T-cell (primary cell): ENCODE measurements at regions of chrX and their contacts with region 1.

Region 1: GRCh38 chrX:102899940-102900916 is 36.8 kb upstream of the RAB40AL start:
- DNase-seq: peak; percentile 28 to 78 (median 57)
- ATAC-seq: peak; percentile 67 to 91 (median 76)
- H3K4me3 ChIP-seq: no peak overlapping the region
- H3K4me3 Mint-ChIP-seq: peak overlapping the region in 2 of 3 donors; percentile 33 to 56
- H3K27ac ChIP-seq: no peak overlapping the region
- H3K27ac Mint-ChIP-seq: no peak overlapping the region
- H3K4me1 ChIP-seq: peaks cover 0 to 4% of the 10 kb centered on the region in 2 experiments
- H3K4me1 Mint-ChIP-seq: peaks cover 8 to 9% (median 9%) of the 10 kb centered on the region in 3 donors
- H3K27me3 ChIP-seq: no peaks in the 10 kb centered on the region
- H3K27me3 Mint-ChIP-seq: peaks cover 0 to 5% of the 10 kb centered on the region in 2 donors

Region 2: GRCh38 chrX:102067966-102068708 is 832.1 kb before region 1 on chrX:
- CTCF ChIA-PET with region 1: interaction called in 1 of 2 experiments, 17 read pairs
- POLR2A ChIA-PET with region 1: no interaction called
- DNase-seq: peak in 9 of 35 experiments; percentile 1 to 45 (median 5)
- ATAC-seq: no peak
- H3K4me3 ChIP-seq: no peak overlapping the region
- H3K4me3 Mint-ChIP-seq: no peak overlapping the region
- H3K27ac ChIP-seq: no peak overlapping the region
- H3K27ac Mint-ChIP-seq: no peak overlapping the region
- H3K4me1 ChIP-seq: no peaks in the 10 kb centered on the region
- H3K4me1 Mint-ChIP-seq: no peaks in the 10 kb centered on the region
- H3K27me3 ChIP-seq: peaks cover 0 to 5% of the 10 kb centered on the region in 2 experiments
- H3K27me3 Mint-ChIP-seq: peaks cover 6 to 27% of the 10 kb centered on the region in 2 donors

Region 3: GRCh38 chrX:102155806-102156179 is 744.4 kb before region 1 on chrX and contains the start of gene BEX5:
- CTCF ChIA-PET with region 1: interaction called in 1 of 2 experiments, 10 read pairs
- POLR2A ChIA-PET with region 1: no interaction called
- DNase-seq: peak; percentile 5 to 76 (median 48)
- ATAC-seq: peak; percentile 90 to 94 (median 92)
- H3K4me3 ChIP-seq: peak within 1 kb of the TSS; percentile 36 to 66
- H3K4me3 Mint-ChIP-seq: peak within 1 kb of the TSS; percentile 89 to 98 (median 98)
- H3K27ac ChIP-seq: peak within 1 kb of the TSS; percentile 75
- H3K27ac Mint-ChIP-seq: peak within 1 kb of the TSS; percentile 94
- H3K4me1 ChIP-seq: peaks cover 0 to 8% of the 10 kb centered on the region in 2 experiments
- H3K4me1 Mint-ChIP-seq: peaks cover 11 to 24% (median 11%) of the 10 kb centered on the region in 3 donors
- H3K27me3 ChIP-seq: no peaks in the 10 kb centered on the region
- H3K27me3 Mint-ChIP-seq: peaks cover 3 to 29% of the 10 kb centered on the region in 2 donors
- total RNA-seq, gene BEX5: 3.9 to 11.1 (median 5.4) TPM

Region 4: GRCh38 chrX:102950908-102951866 is 51.0 kb after region 1 on chrX:
- CTCF ChIA-PET with region 1: interaction called in 1 of 2 experiments, 11 read pairs
- POLR2A ChIA-PET with region 1: no interaction called
- DNase-seq: peak in 33 of 35 experiments; percentile 4 to 69 (median 36)
- ATAC-seq: peak; percentile 61 to 79 (median 73)
- H3K4me3 ChIP-seq: peak overlapping the region; percentile 32 to 37
- H3K4me3 Mint-ChIP-seq: peak overlapping the region; percentile 49 to 75 (median 69)
- H3K27ac ChIP-seq: no peak overlapping the region
- H3K27ac Mint-ChIP-seq: no peak overlapping the region
- H3K4me1 ChIP-seq: peaks cover 0 to 2% of the 10 kb centered on the region in 2 experiments
- H3K4me1 Mint-ChIP-seq: peaks cover 6 to 7% (median 6%) of the 10 kb centered on the region in 3 donors
- H3K27me3 ChIP-seq: no peaks in the 10 kb centered on the region
- H3K27me3 Mint-ChIP-seq: peaks cover 3 to 7% of the 10 kb centered on the region in 2 donors

Region 5: DNA sequence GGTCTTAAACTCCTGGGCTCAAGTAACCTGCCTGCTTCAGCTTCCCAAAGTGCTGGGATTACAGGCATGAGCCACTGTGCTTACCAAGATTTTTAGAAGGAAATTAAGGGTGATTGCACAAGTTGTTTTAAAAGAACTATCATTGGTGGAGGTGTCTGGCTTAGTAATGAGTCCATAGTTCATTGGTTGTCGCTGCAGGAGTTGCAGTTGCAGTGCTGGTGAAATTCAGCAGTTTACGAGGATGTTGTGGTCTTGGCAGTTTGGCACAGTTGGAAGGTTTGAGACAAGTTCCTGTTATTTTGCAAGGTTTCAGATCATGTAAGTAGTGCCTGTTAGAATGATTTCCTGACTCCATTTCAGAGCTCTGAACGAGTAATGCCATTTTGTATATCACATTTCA is 85.0 kb after region 1 on chrX:
- CTCF ChIA-PET with region 1: no interaction called
- POLR2A ChIA-PET with region 1: no interaction called
- DNase-seq: no peak
- ATAC-seq: no peak
- H3K4me3 ChIP-seq: no peak overlapping the region
- H3K4me3 Mint-ChIP-seq: no peak overlapping the region
- H3K27ac ChIP-seq: no peak overlapping the region
- H3K27ac Mint-ChIP-seq: no peak overlapping the region
- H3K4me1 ChIP-seq: no peaks in the 10 kb centered on the region
- H3K4me1 Mint-ChIP-seq: no peaks in the 10 kb centered on the region
- H3K27me3 ChIP-seq: no peaks in the 10 kb centered on the region
- H3K27me3 Mint-ChIP-seq: peaks cover 3 to 31% of the 10 kb centered on the region in 2 donors